ENCODE measurements at regions of chr13 and their contacts with region 1.

Region 1: DNA sequence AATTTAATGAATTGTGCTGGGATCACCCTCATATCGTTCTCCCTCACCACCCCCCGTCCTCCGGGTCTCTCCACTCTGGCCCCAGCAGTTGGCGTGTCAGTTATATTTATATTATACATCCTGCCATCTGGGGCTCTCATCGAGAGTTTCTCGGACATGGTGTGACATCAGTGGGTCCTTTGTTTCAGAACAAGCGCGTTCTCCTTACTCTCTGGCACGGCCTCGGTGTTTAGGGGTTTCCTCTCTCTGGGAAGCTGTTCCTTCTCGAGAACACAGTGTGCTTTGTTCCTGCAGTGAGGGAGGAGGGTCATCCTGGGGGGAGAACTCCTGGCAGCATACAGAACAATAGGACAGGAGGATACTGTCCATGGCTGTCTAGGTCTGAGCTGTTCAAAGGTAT is 9.8 kb upstream of the MCF2L start:
- DNase-seq: peak; percentile 37
- ATAC-seq: peak; percentile 32

Region 2: DNA sequence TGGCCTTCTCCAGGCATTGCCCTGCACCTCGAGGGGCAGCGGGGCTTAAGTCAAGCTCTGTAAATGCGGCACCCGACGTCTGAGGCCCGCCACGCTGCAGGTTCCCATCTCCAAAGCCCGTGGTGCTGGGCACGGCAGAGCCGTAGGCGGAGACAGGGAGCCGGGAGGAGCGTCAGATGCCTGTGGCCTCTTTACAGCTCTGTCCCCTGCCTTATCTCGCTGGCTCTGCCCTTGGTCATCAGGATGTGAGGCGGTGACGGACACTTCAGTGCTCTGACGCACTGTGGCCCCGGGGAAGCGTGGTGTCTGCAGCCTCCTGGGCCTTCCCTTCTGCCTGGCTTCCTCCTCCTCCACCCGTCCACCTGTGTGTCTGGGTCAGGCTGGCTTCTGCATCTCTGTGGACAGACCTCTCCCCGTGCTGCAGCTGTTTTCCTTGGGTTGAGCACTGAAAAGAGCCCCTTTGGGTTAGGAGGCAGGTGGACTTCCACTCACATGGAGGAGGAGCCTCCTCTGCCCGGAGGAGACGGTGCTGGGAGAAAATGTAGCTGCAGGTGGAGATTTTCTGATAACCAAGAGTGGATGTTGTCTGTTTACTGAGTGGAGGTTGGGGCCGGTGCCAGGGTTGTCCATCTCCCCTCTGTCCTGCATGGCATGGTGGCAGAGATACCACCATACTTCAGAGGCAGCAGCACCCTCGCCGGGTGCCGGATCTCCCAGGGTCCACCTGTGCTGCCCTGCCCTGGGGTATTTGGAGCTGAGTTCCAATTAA is 24.4 kb after region 1 on chr13:
- intact Hi-C with region 1: loop called (anchors 1 kb)
- DNase-seq: peak; percentile 61
- ATAC-seq: peak; percentile 67

Region 3: DNA sequence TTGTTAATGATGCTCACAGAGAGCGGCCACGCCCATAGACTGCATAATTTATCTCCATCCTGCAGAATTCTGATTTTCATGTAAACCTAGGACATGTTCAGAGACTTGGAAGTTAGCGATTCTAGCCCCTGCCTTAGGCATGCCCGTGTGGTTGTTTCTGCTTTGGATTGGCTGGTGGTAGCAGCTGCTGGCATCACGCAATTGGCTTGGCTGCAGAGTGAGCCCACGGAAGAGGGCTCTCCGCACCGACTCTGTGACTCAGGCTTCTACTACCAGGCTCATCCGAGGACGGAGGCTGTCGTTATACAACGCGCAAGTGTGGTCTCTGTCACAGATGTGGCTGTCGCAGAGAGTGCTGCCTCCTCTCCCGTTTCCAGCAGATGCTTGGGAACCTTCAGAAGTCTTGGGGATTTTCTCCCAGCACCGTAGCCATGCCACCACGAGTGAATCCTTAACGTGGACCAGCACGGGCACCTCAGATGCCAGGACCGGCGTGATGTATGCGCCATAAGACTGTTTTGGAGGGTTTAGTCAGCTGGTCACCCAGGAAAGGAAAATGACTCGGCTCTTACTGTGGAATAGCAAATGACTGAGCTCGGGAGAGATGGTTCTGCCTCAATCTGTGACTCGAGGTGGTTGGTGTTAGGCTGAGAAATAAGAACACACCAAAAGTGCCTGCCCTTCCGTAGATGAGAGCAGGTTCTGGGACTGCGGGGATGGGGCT is 85.3 kb after region 1 on chr13:
- intact Hi-C with region 1: no loop called
- DNase-seq: no peak
- ATAC-seq: no peak

Measured in Right ventricle myocardium inferior (tissue), 1 donor.